GM12878 (cell line): ENCODE measurements at regions of chr10 and their contacts with region 1.

Region 1: GRCh38 chr10:44965651-44966097 is 6.1 kb downstream of the RASSF4 start:
- DNase-seq: no peak
- ATAC-seq: peak; percentile 49
- H3K4me3 ChIP-seq: peak overlapping the region; percentile 50
- H3K27ac ChIP-seq: peak overlapping the region; percentile 85
- H3K4me1 ChIP-seq: peaks cover 81% of the 10 kb centered on the region
- H3K27me3 ChIP-seq: no peaks in the 10 kb centered on the region
- CTCF ChIP-seq: 0 out of 6 replicates have a peak, but pooled peaks of 2 of the 3 experiments have one; percentile 7 to 8
- EP300 ChIP-seq: peak in 1 of 2 experiments; percentile 13; a peak in 1 of 4 replicates
- POLR2A ChIP-seq: peak; percentile 37; the same call in 1 of the 2 replicates
- RAD21 ChIP-seq: no peak

Region 2: DNA sequence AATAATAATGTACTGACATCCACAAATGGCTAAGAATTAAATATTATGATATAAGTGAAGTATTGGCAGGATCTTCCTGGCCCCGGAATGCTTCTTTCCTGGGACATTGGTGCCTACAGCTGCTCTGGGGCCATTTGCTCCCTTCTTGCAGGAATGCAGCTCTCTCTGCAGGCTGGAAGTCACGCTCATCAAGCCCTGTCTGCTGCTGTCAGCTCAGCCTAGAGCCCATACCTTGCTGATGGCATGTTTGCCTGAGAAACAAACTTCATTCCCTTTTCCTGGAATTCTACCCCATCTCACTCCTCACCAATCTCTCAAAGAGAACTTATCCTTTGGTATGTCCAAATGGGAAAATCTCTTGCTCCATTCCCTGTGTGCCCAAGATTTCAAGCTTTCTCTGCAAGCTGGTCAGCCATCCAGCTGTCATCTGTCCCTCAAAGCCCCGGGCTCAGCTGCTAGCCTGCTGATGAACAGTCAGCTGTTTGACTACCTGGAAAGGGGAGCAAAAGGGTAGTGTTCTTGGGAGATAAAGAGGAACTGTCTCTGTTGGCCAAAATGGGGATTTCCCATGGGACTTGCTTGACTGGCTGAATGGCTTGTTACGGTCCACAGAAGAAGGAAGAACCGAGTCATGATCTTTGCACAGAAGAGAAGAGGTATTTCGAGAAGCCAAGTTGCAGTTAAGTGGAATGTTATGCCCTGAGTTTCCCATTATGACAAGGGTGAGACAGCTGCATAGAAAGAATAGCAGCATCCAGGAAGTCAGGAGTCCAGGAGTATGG is 18.1 kb before region 1 on chr10:
- CTCF ChIA-PET with region 1: interaction called, 80 read pairs
- POLR2A ChIA-PET with region 1: interaction called, 174 read pairs
- RAD21 ChIA-PET with region 1: interaction called, 60 read pairs
- SMC1A ChIA-PET with region 1: interaction called, 147 read pairs
- in situ Hi-C with region 1: no loop called
- intact Hi-C with region 1: loop called (anchors 2 kb)
- DNase-seq: peak; percentile 80
- ATAC-seq: peak; percentile 79
- H3K4me3 ChIP-seq: peak overlapping the region; percentile 16; the same call in 1 of the 2 replicates
- H3K27ac ChIP-seq: peak overlapping the region; percentile 67
- H3K4me1 ChIP-seq: peaks cover 51% of the 10 kb centered on the region
- H3K27me3 ChIP-seq: no peaks in the 10 kb centered on the region
- CTCF ChIP-seq: no peak
- EP300 ChIP-seq: no peak
- POLR2A ChIP-seq: no peak
- RAD21 ChIP-seq: no peak

Region 3: DNA sequence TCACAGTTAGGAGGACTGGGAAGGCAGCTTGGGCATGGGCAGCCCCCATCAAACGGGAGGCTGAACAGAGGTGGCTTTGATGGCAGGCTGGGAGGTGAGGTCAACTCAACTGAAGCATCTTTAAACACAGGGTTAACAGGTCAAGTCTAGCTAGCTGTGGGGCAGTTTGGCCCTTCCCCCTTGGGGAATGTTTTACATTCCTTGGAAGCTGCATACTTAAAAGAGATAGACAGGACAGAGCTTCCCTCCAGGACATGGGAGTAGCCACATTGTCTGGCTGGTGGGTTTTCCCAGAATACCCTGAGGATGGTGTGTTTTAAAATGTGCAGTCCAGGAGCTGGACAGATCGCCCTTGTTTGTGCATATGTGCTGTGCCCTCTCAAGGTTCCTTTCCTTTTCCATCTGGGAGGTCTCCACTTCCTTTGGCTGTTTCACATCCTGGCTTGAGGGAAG is 12.9 kb before region 1 on chr10:
- CTCF ChIA-PET with region 1: interaction called, 80 read pairs
- POLR2A ChIA-PET with region 1: interaction called, 174 read pairs
- RAD21 ChIA-PET with region 1: interaction called, 60 read pairs
- SMC1A ChIA-PET with region 1: interaction called, 147 read pairs
- in situ Hi-C with region 1: no loop called
- intact Hi-C with region 1: no loop called
- DNase-seq: no peak
- ATAC-seq: no peak
- H3K4me3 ChIP-seq: no peak overlapping the region
- H3K27ac ChIP-seq: no peak overlapping the region
- H3K4me1 ChIP-seq: peaks cover 32% of the 10 kb centered on the region
- H3K27me3 ChIP-seq: no peaks in the 10 kb centered on the region
- CTCF ChIP-seq: no peak
- EP300 ChIP-seq: no peak
- POLR2A ChIP-seq: no peak
- RAD21 ChIP-seq: no peak